ENCODE measurements at regions of chr22 and their contacts with region 1.

Region 1: DNA sequence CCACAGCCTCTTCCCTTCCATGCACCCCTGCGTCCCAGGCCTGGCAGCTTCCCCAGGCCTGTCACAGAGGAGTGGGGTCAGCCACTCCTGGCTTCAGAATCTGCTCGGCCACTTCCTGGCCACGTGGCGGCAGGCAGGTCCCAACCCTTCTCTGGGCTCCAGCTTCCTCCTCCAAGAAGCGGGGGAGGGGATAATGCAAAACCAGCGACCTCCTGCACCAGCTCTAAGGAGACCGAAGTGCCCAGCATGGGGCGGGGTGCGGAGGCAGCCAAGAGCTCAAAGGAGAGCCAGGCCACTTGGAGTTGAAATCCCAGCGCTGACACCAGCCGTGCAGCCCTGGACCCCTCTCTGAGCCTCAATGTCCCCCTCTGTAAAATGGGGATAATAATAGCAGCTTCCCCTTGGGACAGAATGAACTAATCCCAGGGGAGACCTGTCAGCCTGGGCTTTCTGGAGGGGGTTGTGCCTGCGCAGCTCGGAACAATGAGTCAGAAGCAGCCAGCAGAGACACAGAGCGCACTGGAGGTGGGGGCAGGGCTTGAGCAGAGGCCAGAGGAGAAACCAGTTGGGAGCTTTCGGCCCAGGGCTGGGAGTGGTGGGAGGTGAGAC is 22.8 kb upstream of the PICK1 start:
- DNase-seq: peak; percentile 74 to 86
- H3K4me3 ChIP-seq: peak overlapping the region in 1 of 3 donors; percentile 35
- H3K27ac ChIP-seq: peak overlapping the region; percentile 96
- H3K4me1 ChIP-seq: peaks cover 20 to 34% of the 10 kb centered on the region in 2 donors
- H3K27me3 ChIP-seq: no peaks in the 10 kb centered on the region
- CTCF ChIP-seq: no peak
- POLR2A ChIP-seq: no peak

Region 2: GRCh38 chr22:37982938-37983859 is 51.2 kb before region 1 on chr22:
- intact Hi-C with region 1: loop called (anchors 10 kb)
- DNase-seq: peak in 1 of 2 donors; percentile 53
- H3K4me3 ChIP-seq: peak overlapping the region in 2 of 3 donors; percentile 66 to 75
- H3K27ac ChIP-seq: peak overlapping the region; percentile 87 to 91
- H3K4me1 ChIP-seq: no peaks in the 10 kb centered on the region
- H3K27me3 ChIP-seq: no peaks in the 10 kb centered on the region
- CTCF ChIP-seq: peak; percentile 24 to 77 (median 66)
- POLR2A ChIP-seq: no peak